Activated T-helper 1 cell treated with anti-CD3 and anti-CD28 coated beads, Interleukin-12 subunit alpha, Interleukin-12 subunit beta, Interleukin-2, Interleukin-4 antibody, amounts not matched to agents 30 ng/mL and 10 ng/mL and 1 ng/mL, durations not matched to agents 14 hours and 24 hours and 36 hours (primary cell): ENCODE measurements at regions of chr1 and their contacts with region 1.

Region 1: GRCh38 chr1:88180449-88181108 is 503.5 kb upstream of the PKN2 start:
- DNase-seq: peak; percentile 29
- H3K4me3 Mint-ChIP-seq: no peak overlapping the region
- H3K27ac Mint-ChIP-seq: no peak overlapping the region
- H3K4me1 Mint-ChIP-seq: no peaks in the 10 kb centered on the region
- H3K27me3 Mint-ChIP-seq: peaks cover 2% of the 10 kb centered on the region

Region 2: DNA sequence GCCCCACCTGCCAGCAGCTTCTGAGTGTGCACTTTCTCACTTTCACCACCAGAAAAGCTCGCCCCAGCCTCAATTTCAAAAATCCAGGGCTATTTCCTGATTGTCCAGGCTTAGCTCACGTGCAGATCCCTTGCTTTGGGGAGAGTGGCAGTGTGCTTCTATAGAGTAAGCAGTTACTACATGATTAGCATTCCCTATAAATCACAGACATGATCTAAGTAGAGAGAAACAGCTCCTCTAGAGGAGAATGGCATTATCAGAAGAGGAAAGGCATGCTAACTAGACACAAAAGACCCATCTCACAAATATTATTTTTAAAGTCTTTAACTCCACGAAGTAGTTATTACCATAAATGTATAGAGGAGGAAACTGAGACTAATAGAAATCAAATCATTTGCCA is 47.6 kb after region 1 on chr1:
- intact Hi-C with region 1: no loop called
- DNase-seq: no peak
- H3K4me3 Mint-ChIP-seq: no peak overlapping the region
- H3K27ac Mint-ChIP-seq: no peak overlapping the region
- H3K4me1 Mint-ChIP-seq: no peaks in the 10 kb centered on the region
- H3K27me3 Mint-ChIP-seq: no peaks in the 10 kb centered on the region

Region 3: DNA sequence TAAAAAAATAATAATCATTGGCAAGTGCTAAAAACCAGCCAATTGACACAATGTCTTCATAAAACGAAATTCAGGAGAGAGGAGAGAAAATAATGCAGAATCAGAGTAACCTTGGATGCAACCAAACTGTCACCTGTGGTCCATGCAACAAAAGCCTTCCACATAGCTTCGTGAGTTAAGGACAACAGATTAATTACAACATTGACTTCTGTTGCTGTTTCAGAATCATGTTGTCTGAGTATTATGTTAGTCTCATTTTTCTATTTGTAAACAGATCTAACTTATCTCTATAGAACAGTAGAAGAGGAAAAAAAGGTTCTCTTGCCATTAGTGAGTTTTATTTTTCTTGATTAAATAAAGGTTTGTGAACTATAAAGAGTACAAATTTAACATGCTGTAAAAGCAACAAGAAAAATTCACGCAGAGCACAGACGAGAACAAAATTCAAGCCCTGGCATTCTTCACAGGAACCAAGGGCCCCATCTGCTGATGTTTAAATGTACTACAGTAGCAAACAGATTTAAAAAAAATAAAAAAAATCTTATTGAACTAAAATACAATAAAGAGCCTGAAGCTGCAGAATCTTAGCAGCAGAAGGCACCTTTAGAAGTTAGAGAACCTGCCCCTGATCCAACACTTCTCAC is 122.4 kb after region 1 on chr1:
- intact Hi-C with region 1: loop called (anchors 5 kb)
- DNase-seq: no peak
- H3K4me3 Mint-ChIP-seq: no peak overlapping the region
- H3K27ac Mint-ChIP-seq: no peak overlapping the region
- H3K4me1 Mint-ChIP-seq: no peaks in the 10 kb centered on the region
- H3K27me3 Mint-ChIP-seq: no peaks in the 10 kb centered on the region

Region 4: GRCh38 chr1:88595355-88596002 is 414.9 kb after region 1 on chr1:
- intact Hi-C with region 1: loop called (anchors 1 kb)
- DNase-seq: no peak
- H3K4me3 Mint-ChIP-seq: no peak overlapping the region
- H3K27ac Mint-ChIP-seq: no peak overlapping the region
- H3K4me1 Mint-ChIP-seq: no peaks in the 10 kb centered on the region
- H3K27me3 Mint-ChIP-seq: peaks cover under 1% of the 10 kb centered on the region